Activated T-helper 1 cell treated with anti-CD3 and anti-CD28 coated beads, Interleukin-12 subunit alpha, Interleukin-12 subunit beta, Interleukin-2, Interleukin-4 antibody, amounts not matched to agents 30 ng/mL and 10 ng/mL and 1 ng/mL, durations not matched to agents 14 hours and 24 hours and 36 hours (primary cell): ENCODE measurements at regions of chr2 and their contacts with region 1.

Region 1: DNA sequence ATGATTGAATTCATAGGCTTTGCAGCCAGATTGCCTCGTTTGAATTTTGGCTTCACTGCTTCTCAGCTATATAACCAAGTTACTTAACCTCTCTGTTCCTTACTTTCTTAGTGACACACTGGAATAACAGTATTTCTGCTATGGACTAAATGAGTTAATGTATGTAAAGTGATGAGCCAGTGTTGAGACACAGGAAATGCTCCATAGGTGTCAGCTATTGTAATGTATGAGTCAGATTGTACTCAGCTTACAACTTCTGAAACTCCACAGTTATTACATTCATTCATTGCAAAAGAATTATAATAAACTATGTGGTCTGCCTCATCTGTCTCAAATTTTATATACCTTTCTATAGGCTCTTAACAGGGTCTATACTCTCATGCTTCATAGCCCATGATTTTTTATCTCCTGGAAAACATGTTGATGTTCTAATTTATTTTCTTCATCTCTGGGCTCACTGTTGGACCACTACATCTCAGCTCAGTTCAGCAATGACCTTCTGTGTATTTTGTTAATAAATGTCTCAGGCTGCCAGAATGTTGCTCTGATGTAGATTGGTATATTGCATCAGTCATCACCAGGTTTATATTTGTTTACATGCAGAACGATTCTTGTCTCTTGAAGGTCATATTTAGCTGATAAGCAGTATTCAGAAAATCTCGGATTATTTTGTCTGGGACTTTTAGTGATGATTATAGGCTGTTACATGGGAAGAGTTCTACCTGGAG is 76.2 kb downstream of the MAP3K20 start:
- DNase-seq: no peak
- H3K4me3 Mint-ChIP-seq: peak overlapping the region; percentile 53
- H3K27ac Mint-ChIP-seq: peak overlapping the region; percentile 77
- H3K4me1 Mint-ChIP-seq: peaks cover 64% of the 10 kb centered on the region
- H3K27me3 Mint-ChIP-seq: peaks cover 4% of the 10 kb centered on the region

Region 2: GRCh38 chr2:172698041-172698863 is 453.6 kb before region 1 on chr2:
- intact Hi-C with region 1: loop called (anchors 5 kb)
- DNase-seq: no peak
- H3K4me3 Mint-ChIP-seq: no peak overlapping the region
- H3K27ac Mint-ChIP-seq: peak overlapping the region; percentile 27
- H3K4me1 Mint-ChIP-seq: peaks cover 25% of the 10 kb centered on the region
- H3K27me3 Mint-ChIP-seq: peaks cover 3% of the 10 kb centered on the region

Region 3: GRCh38 chr2:173048897-173049661 is 102.8 kb before region 1 on chr2:
- intact Hi-C with region 1: loop called (anchors 5 kb)
- DNase-seq: no peak
- H3K4me3 Mint-ChIP-seq: no peak overlapping the region
- H3K27ac Mint-ChIP-seq: peak overlapping the region; percentile 59
- H3K4me1 Mint-ChIP-seq: peaks cover 18% of the 10 kb centered on the region
- H3K27me3 Mint-ChIP-seq: peaks cover 19% of the 10 kb centered on the region

Region 4: GRCh38 chr2:173090276-173090877 is 61.5 kb before region 1 on chr2:
- intact Hi-C with region 1: no loop called
- DNase-seq: no peak
- H3K4me3 Mint-ChIP-seq: no peak overlapping the region
- H3K27ac Mint-ChIP-seq: no peak overlapping the region
- H3K4me1 Mint-ChIP-seq: no peaks in the 10 kb centered on the region
- H3K27me3 Mint-ChIP-seq: no peaks in the 10 kb centered on the region

Region 5: GRCh38 chr2:173134703-173135102 is 17.1 kb before region 1 on chr2:
- intact Hi-C with region 1: loop called (anchors 1 kb)
- DNase-seq: no peak
- H3K4me3 Mint-ChIP-seq: peak overlapping the region; percentile 58
- H3K27ac Mint-ChIP-seq: peak overlapping the region; percentile 76
- H3K4me1 Mint-ChIP-seq: peaks cover 76% of the 10 kb centered on the region
- H3K27me3 Mint-ChIP-seq: peaks cover 21% of the 10 kb centered on the region

Region 6: DNA sequence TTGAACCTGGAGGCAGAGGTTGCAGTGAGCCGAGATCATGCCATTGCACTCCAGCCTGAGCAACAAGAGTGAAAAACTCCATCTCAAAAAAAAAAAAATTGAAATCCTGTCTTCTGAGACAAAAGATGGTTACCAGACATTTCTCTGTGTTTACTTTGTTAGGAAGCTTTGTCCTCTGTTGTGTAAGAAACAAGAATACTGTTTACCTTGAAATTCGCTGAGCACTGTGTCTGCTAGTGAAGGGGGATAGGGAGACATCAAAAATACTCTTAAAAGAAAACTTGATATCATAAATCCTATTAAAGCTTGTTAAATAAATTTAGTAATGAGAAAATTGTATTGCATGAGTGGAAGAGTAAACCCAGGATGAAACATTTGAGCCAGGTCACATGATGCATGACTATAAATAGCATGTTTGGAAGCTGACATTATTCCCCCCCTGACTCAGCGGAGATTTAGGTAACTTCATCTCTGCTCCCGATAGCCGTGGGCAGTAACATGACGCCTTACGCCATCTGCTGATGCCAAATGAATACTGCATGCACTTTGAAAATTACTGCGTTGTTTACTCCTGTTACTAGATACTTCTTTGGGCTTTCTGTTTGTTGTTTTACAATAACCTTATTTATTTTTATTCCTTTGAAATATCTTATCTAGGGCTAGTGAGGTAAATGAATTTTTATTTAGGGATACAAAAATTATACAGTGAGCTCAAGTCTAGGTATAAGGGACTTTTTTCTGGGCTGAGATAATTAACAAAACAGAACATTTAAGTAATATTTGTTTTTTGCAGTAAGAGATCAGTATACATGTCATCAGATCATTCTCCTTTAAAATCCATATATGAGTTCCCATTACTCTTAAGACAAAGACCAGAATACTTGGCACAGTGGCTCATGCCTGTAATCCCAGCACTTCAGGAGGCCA is 58.7 kb after region 1 on chr2:
- intact Hi-C with region 1: no loop called
- DNase-seq: peak; percentile 41
- H3K4me3 Mint-ChIP-seq: no peak overlapping the region
- H3K27ac Mint-ChIP-seq: no peak overlapping the region
- H3K4me1 Mint-ChIP-seq: peaks cover 6% of the 10 kb centered on the region
- H3K27me3 Mint-ChIP-seq: no peaks in the 10 kb centered on the region

Region 7: GRCh38 chr2:173286153-173286809 is 134.4 kb after region 1 on chr2:
- intact Hi-C with region 1: loop called (anchors 5 kb)
- DNase-seq: no peak
- H3K4me3 Mint-ChIP-seq: no peak overlapping the region
- H3K27ac Mint-ChIP-seq: peak overlapping the region; percentile 40
- H3K4me1 Mint-ChIP-seq: peaks cover 5% of the 10 kb centered on the region
- H3K27me3 Mint-ChIP-seq: no peaks in the 10 kb centered on the region